Activated CD4-positive, alpha-beta T cell treated with anti-CD3 and anti-CD28 coated beads, Interleukin-2, amount 10 ng/mL, durations not matched to agents 24 days and 14 days (primary cell): ENCODE measurements at regions of chr17 and their contacts with region 1.

Region 1: DNA sequence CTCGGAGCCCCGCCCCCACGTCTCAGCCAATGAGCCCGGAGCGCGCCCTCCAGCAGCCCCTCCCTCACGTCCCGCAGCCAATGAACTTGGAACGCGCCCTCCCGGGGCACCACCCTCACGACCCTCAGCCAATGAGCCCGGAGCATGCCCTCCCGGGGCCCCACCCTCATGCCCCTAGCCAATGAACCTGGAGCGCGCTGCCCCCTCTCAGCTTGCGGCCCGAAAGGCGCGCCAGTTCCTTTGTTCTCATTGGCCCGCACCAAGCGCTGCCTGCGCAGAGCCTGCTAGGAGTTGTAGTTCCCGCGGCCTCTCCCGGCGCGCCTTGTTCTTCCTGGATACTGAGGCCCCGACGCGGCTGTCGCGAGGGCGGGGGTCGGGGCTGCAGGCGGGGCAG is at the start of gene LRRC45:
- DNase-seq: peak; percentile 100
- H3K4me3 Mint-ChIP-seq: peak within 1 kb of the TSS; percentile 88
- H3K27ac Mint-ChIP-seq: peak within 1 kb of the TSS; percentile 76
- H3K4me1 Mint-ChIP-seq: peaks cover 23% of the 10 kb centered on the region
- H3K27me3 Mint-ChIP-seq: no peaks in the 10 kb centered on the region
- total RNA-seq, gene LRRC45: 39.0 and 40.6 TPM in 2 replicates

Region 2: GRCh38 chr17:81890447-81891299 is 132.3 kb before region 1 on chr17:
- intact Hi-C with region 1: loop called (anchors 2 kb)
- DNase-seq: peak; percentile 80
- H3K4me3 Mint-ChIP-seq: peak overlapping the region; percentile 88
- H3K27ac Mint-ChIP-seq: peak overlapping the region; percentile 94
- H3K4me1 Mint-ChIP-seq: peaks cover 17% of the 10 kb centered on the region
- H3K27me3 Mint-ChIP-seq: no peaks in the 10 kb centered on the region

Region 3: DNA sequence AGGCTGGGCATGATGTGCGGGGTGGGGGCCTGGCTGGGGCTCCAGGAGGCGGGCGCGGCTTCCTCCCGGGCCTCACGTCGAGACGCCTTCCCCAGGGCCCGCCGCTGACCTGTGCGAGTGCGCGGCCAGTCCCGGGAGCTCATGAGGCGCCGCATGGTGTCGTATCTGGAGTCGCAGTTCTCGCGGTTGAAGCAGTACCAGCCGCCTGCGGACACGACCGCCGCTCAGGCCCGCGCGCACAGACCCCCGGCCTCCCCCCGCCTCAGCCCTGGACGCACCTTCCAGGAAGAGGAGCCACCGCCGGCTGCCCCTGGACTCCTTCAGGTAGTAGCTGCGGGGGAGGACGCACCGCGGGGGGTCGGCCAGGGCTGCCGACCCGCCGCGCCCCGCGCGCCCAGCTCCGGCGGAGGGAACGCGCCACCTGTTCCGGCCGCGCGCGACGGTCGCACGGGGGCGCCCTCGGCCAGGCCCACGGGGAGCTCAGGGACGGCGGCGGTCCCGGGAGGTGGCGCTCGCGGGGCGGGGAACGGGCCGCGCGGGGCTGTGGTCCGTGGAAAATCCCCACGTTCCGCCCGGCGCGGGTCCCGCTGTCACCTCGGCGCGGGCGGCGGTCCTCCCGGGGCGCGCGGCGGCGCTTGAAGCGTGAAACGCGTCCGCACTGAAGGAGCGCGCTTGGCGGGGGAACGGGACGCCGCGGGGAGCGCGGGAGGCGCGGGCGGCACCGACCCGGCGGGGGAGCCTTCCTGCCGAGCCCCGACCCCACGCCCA is 63.4 kb before region 1 on chr17:
- intact Hi-C with region 1: loop called (anchors 1 kb)
- DNase-seq: peak; percentile 97
- H3K4me3 Mint-ChIP-seq: peak overlapping the region; percentile 65
- H3K27ac Mint-ChIP-seq: no peak overlapping the region
- H3K4me1 Mint-ChIP-seq: peaks cover 3% of the 10 kb centered on the region
- H3K27me3 Mint-ChIP-seq: peaks cover 40% of the 10 kb centered on the region

Region 4: DNA sequence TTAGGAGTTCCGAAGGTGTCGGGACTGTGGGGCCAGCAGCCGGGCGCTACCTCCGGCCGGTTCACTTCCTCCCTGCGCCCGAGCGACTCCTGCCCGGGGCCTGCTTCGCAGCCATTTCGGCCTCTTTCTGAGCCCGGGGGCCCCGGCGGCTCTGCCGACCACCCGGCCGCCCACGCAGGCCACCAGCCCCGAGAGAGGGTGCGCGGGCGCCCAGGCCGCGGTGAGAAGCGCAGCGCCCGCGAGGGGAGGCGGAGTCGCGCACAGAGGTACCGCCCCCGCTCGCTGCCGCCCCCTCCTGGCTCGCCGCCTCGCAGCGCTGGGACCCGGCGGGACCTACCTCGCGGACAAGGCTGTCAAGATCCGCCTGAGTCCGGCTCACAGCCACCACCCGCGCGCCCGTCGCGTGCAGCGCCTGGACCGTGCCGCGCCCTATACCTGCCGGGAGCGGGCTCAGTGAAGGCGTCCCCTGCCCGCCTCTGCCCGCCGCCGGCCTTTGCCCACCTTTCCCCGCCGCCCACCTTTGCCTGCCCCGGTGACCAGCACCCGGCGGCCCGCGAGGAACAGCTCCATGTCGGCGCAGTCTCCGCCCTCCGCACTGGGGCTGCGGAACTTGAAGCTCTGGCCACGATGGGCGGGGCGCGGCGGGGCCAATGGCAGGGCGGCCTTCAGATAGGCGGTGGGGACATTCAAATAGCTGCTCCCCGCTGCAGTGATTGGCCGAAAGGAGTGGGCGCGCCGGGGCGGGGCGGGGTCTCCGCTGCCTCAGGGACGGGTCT is 14.3 kb after region 1 on chr17 and contains the start of gene DCXR:
- intact Hi-C with region 1: loop called (anchors 1 kb)
- DNase-seq: peak; percentile 99
- H3K4me3 Mint-ChIP-seq: peak within 1 kb of the TSS; percentile 83
- H3K27ac Mint-ChIP-seq: peak within 1 kb of the TSS; percentile 96
- H3K4me1 Mint-ChIP-seq: peaks cover 19% of the 10 kb centered on the region
- H3K27me3 Mint-ChIP-seq: peaks cover 2% of the 10 kb centered on the region
- total RNA-seq, gene DCXR: 128 TPM in 2 replicates

Region 5: DNA sequence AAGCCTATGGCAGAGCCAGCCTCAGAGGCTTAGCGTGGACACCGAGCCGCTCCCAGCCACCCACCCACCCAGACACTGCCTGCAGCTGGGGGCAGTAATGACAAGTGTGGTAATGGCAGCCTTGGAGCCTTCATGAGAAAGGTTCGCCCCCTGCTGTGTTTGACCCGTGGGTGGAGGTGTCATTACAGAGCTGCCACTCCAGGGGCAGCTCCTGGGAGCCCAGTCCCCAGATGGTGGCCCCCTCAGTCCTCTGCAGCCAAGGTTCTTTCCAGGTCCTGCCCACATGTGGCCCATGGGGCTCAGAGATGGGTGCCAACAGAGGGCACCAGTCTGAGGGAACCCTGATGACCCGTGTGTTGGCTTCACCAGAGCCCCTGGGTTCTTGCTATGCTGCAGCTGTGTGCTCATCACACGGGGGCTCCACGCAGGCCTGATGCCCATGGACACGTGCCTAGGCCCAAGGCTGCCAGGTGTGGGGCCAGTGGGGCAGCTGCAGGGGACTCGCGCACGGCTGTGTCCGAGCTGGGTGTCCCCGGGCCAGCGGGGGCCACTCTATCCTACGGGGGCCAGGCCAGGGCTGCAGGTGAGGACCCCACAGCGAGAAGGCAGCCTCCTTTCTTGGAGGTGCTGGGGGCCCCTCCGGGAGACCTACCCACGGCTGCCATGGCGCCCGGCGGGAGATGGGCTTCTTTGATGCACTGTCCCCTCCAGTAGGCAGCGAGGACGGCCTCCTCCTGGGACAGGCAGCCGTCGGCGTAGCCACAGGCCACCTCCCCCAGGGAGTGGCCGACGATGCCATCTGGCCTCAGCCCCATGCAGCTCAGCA is 67.0 kb after region 1 on chr17:
- intact Hi-C with region 1: no loop called
- DNase-seq: no peak
- H3K4me3 Mint-ChIP-seq: no peak overlapping the region
- H3K27ac Mint-ChIP-seq: no peak overlapping the region
- H3K4me1 Mint-ChIP-seq: no peaks in the 10 kb centered on the region
- H3K27me3 Mint-ChIP-seq: no peaks in the 10 kb centered on the region

Region 6: DNA sequence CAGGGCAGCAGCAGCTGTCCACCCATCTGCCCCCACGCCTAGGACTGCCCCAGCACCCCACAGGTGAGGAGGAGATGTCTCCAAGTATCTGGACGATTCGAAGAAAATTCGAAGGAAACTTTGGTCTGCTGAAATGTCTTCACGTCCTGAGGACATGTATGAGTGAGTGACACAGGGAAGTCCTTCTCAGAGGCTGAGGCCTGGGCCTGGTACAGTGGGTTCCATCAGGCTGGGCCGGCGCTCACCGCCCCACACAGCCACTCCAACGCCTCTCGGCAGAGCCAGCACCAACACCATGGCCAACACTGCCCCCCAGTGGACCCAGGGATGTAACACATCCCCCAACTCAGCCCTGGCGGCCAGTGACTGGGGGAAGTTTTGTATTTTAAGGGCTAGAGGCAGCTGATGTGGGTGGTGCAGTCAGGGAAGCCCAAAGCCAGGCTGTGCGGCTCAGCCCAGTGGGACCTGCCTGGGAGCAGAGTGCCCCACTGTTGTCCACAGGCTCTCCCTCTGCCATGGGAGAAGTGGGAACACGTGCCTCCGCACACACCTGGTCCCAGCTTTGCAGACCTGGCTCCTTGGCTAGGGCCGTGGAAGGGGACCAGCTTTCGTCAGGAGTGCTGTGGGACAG is 130.9 kb after region 1 on chr17:
- intact Hi-C with region 1: loop called (anchors 2 kb)
- DNase-seq: peak; percentile 95
- H3K4me3 Mint-ChIP-seq: no peak overlapping the region
- H3K27ac Mint-ChIP-seq: no peak overlapping the region
- H3K4me1 Mint-ChIP-seq: peaks cover 5% of the 10 kb centered on the region
- H3K27me3 Mint-ChIP-seq: no peaks in the 10 kb centered on the region